Natural killer cell (primary cell): ENCODE measurements at regions of chr7 and their contacts with region 1.

Region 1: GRCh38 chr7:102464577-102465280 is at the starts of genes ALKBH4 and LRWD1:
- DNase-seq: peak; percentile 93 to 97
- ATAC-seq: peak; percentile 95 to 99 (median 98)
- H3K4me3 ChIP-seq: peak within 1 kb of the TSS; percentile 98
- H3K4me3 Mint-ChIP-seq: peak within 1 kb of the TSS; percentile 90
- H3K27ac ChIP-seq: peak within 1 kb of the TSS; percentile 53
- H3K27ac Mint-ChIP-seq: peak within 1 kb of the TSS; percentile 72 to 83
- H3K4me1 ChIP-seq: peaks cover 25% of the 10 kb centered on the region
- H3K4me1 Mint-ChIP-seq: peaks cover 12 to 50% of the 10 kb centered on the region in 2 donors
- H3K27me3 ChIP-seq: no peaks in the 10 kb centered on the region
- H3K27me3 Mint-ChIP-seq: no peaks in the 10 kb centered on the region
- CTCF ChIP-seq: peak; percentile 15
- total RNA-seq, gene ALKBH4: 4.1 to 9.2 (median 9.1) TPM
- total RNA-seq, gene LRWD1: 20.0 to 24.1 (median 20.4) TPM

Region 2: GRCh38 chr7:102326157-102326889 is 138.4 kb before region 1 on chr7:
- intact Hi-C with region 1: no loop called
- DNase-seq: no peak
- ATAC-seq: no peak
- H3K4me3 ChIP-seq: no peak overlapping the region
- H3K4me3 Mint-ChIP-seq: no peak overlapping the region
- H3K27ac ChIP-seq: no peak overlapping the region
- H3K27ac Mint-ChIP-seq: no peak overlapping the region
- H3K4me1 ChIP-seq: no peaks in the 10 kb centered on the region
- H3K4me1 Mint-ChIP-seq: peaks cover 0 to 6% of the 10 kb centered on the region in 2 donors
- H3K27me3 ChIP-seq: no peaks in the 10 kb centered on the region
- H3K27me3 Mint-ChIP-seq: peaks cover 13 to 17% of the 10 kb centered on the region in 2 donors
- CTCF ChIP-seq: no peak

Region 3: GRCh38 chr7:102396027-102397019 is 68.4 kb before region 1 on chr7 and contains the start of gene PRKRIP1:
- intact Hi-C with region 1: loop called (anchors 2 kb)
- DNase-seq: peak; percentile 81 to 97
- ATAC-seq: peak; percentile 95
- H3K4me3 ChIP-seq: peak within 1 kb of the TSS; percentile 82
- H3K4me3 Mint-ChIP-seq: peak within 1 kb of the TSS; percentile 93
- H3K27ac ChIP-seq: peak within 1 kb of the TSS; percentile 77
- H3K27ac Mint-ChIP-seq: peak within 1 kb of the TSS; percentile 91 to 92
- H3K4me1 ChIP-seq: peaks cover 22% of the 10 kb centered on the region
- H3K4me1 Mint-ChIP-seq: peaks cover 18% of the 10 kb centered on the region in 2 donors
- H3K27me3 ChIP-seq: no peaks in the 10 kb centered on the region
- H3K27me3 Mint-ChIP-seq: no peaks in the 10 kb centered on the region
- CTCF ChIP-seq: no peak
- total RNA-seq, gene PRKRIP1: 38.2 to 44.2 (median 39.5) TPM

Region 4: GRCh38 chr7:102415685-102416299 is 48.9 kb before region 1 on chr7:
- intact Hi-C with region 1: loop called (anchors 5 kb)
- DNase-seq: peak; percentile 78 to 80
- ATAC-seq: peak; percentile 79 to 85 (median 84)
- H3K4me3 ChIP-seq: no peak overlapping the region
- H3K4me3 Mint-ChIP-seq: peak overlapping the region; percentile 87
- H3K27ac ChIP-seq: peak overlapping the region; percentile 84
- H3K27ac Mint-ChIP-seq: peak overlapping the region; percentile 96 to 97
- H3K4me1 ChIP-seq: peaks cover 56% of the 10 kb centered on the region
- H3K4me1 Mint-ChIP-seq: peaks cover 46 to 49% of the 10 kb centered on the region in 2 donors
- H3K27me3 ChIP-seq: no peaks in the 10 kb centered on the region
- H3K27me3 Mint-ChIP-seq: no peaks in the 10 kb centered on the region
- CTCF ChIP-seq: no peak